Esophagus muscularis mucosa (tissue), 4 donors: ENCODE measurements at regions of chr4 and their contacts with region 1.

Region 1: DNA sequence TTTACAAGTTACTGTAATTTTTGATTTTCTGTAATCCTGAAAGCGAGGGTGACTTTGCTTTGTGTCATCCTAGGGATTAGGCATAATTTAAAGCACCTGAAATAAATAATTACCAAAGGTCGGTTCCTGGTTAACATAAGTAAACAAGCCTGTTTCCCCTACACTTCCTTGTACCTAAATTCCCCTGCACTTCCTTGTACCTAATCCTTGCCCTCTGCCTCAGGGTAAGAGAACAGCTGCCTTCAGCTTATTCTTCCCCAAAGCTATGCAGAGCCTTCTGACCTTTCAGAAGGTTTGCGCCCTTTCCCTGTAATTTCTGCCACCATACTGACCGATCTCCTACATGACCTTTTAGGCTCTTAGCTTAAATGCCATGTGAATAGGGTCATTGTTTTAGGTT is 166.1 kb upstream of the PDE5A start:
- DNase-seq: no peak
- H3K4me3 ChIP-seq: no peak overlapping the region
- H3K27ac ChIP-seq: no peak overlapping the region
- H3K4me1 ChIP-seq: peaks cover 0 to 11% (median 6%) of the 10 kb centered on the region in 4 donors
- H3K27me3 ChIP-seq: no peaks in the 10 kb centered on the region
- CTCF ChIP-seq: no peak
- EP300 ChIP-seq: no peak
- POLR2A ChIP-seq: no peak

Region 2: GRCh38 chr4:119314356-119314755 is 480.3 kb before region 1 on chr4:
- intact Hi-C with region 1: loop called (anchors 10 kb)
- DNase-seq: no peak
- H3K4me3 ChIP-seq: no peak overlapping the region
- H3K27ac ChIP-seq: no peak overlapping the region
- H3K4me1 ChIP-seq: peaks cover 0 to 6% (median 0%) of the 10 kb centered on the region in 4 donors
- H3K27me3 ChIP-seq: no peaks in the 10 kb centered on the region
- CTCF ChIP-seq: peak; percentile 40 to 58 (median 55)
- EP300 ChIP-seq: no peak
- POLR2A ChIP-seq: no peak

Region 3: DNA sequence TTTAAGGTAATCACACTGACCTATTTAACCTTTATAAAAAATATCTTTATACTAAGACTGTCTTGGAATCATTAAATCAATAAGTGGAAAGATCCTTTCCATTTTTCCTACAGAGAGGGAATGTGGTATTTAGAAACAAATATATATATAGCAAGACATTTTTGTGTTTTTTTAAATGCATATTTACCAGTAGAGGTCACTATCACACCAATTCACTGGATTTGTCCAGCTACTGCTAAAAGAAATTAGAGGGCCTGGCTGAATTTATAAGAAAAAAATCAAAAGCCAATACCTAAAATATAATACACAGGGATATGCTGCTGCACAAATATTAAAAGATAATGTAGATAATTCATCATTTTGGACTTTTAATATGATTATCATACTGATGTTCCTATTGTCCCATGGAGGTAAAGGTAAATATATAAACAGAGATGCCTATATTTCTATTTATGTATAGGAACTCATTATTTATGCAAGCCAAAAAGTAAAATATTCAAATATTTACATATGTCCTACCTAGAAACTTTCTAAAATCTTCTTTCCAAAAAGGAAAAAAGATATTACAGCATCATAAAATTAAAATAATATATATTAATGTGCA is 235.6 kb before region 1 on chr4:
- intact Hi-C with region 1: no loop called
- DNase-seq: no peak
- H3K4me3 ChIP-seq: no peak overlapping the region
- H3K27ac ChIP-seq: peak overlapping the region in 3 of 4 donors; percentile 11 to 43 (median 38)
- H3K4me1 ChIP-seq: peaks cover 0 to 41% (median 29%) of the 10 kb centered on the region in 4 donors
- H3K27me3 ChIP-seq: no peaks in the 10 kb centered on the region
- CTCF ChIP-seq: peak; percentile 55 to 57 (median 56)
- EP300 ChIP-seq: no peak
- POLR2A ChIP-seq: no peak